Activated CD8-positive, alpha-beta memory T cell treated with anti-CD3 and anti-CD28 coated beads, Interleukin-2, amount 10 ng/mL, durations not matched to agents 7 days and 5 days (primary cell): ENCODE measurements at regions of chr1 and their contacts with region 1.

Region 1: DNA sequence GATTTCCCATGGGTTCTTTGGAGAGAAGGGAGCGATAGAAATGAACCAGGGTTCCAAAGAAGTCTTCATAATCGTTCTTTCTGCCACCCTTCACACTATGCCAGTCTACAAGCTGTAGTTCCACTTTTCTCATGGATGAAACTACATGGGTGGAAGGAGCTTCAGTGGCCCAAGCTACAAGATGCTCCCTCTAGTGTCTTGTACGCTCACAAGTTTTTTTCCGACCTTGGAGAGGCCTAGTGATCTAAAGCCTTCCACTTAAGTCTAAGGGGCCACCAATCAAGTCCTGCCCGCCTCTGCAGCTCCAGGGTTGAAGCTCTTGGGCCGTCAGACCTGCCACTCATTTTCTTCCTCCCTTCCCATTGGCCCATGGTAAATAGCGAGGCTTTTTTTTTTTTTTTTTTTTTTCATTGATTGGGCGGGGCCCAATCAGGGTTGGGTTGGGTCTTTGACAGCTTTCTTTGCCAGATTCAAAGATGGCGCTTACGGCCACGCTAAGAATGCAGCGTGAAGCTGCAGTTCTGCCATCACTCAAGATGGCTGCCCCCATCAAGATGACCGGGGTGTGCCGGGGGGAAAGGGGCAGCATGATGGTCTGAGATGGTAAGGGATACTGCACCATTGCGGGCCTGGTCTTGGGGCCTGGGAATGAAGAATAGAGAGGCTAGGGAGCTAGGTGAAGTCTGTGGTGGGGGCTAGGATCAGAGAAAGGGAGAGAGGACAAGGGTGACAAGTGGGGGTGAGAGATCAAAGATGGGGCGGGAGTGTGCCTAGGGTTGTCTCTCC is at the start of gene TOMM40L:
- DNase-seq: peak; percentile 97
- ATAC-seq: peak; percentile 98
- H3K4me3 Mint-ChIP-seq: peak within 1 kb of the TSS; percentile 95
- H3K27ac Mint-ChIP-seq: peak within 1 kb of the TSS; percentile 93
- H3K4me1 Mint-ChIP-seq: peaks cover 32% of the 10 kb centered on the region
- H3K27me3 Mint-ChIP-seq: no peaks in the 10 kb centered on the region
- total RNA-seq, gene TOMM40L: 19.4 to 27.6 TPM

Region 2: GRCh38 chr1:161038523-161039153 is 187.1 kb before region 1 on chr1 and contains the start of gene TSTD1:
- CTCF ChIA-PET with region 1: no interaction called
- DNase-seq: peak; percentile 90
- ATAC-seq: peak; percentile 92
- H3K4me3 Mint-ChIP-seq: peak within 1 kb of the TSS; percentile 84
- H3K27ac Mint-ChIP-seq: peak within 1 kb of the TSS; percentile 90
- H3K4me1 Mint-ChIP-seq: peaks cover 47% of the 10 kb centered on the region
- H3K27me3 Mint-ChIP-seq: no peaks in the 10 kb centered on the region
- total RNA-seq, gene TSTD1: 62.8 TPM

Region 3: GRCh38 chr1:161165742-161166668 is 59.7 kb before region 1 on chr1 and contains the start of gene PPOX:
- CTCF ChIA-PET with region 1: interaction called, 24 read pairs
- DNase-seq: peak; percentile 98
- ATAC-seq: peak; percentile 95
- H3K4me3 Mint-ChIP-seq: peak within 1 kb of the TSS; percentile 83
- H3K27ac Mint-ChIP-seq: peak within 1 kb of the TSS; percentile 95
- H3K4me1 Mint-ChIP-seq: peaks cover 44% of the 10 kb centered on the region
- H3K27me3 Mint-ChIP-seq: no peaks in the 10 kb centered on the region
- total RNA-seq, gene PPOX: 34.5 to 43.9 TPM

Region 4: GRCh38 chr1:161192476-161193465 is 33.0 kb before region 1 on chr1:
- CTCF ChIA-PET with region 1: interaction called, 77 read pairs
- DNase-seq: peak; percentile 82
- ATAC-seq: peak; percentile 94
- H3K4me3 Mint-ChIP-seq: no peak overlapping the region
- H3K27ac Mint-ChIP-seq: peak overlapping the region; percentile 83
- H3K4me1 Mint-ChIP-seq: peaks cover 42% of the 10 kb centered on the region
- H3K27me3 Mint-ChIP-seq: no peaks in the 10 kb centered on the region

Region 5: GRCh38 chr1:161209790-161210409 is 15.8 kb before region 1 on chr1:
- CTCF ChIA-PET with region 1: interaction called, 110 read pairs
- DNase-seq: peak; percentile 82
- ATAC-seq: peak; percentile 90
- H3K4me3 Mint-ChIP-seq: no peak overlapping the region
- H3K27ac Mint-ChIP-seq: peak overlapping the region; percentile 57
- H3K4me1 Mint-ChIP-seq: peaks cover 32% of the 10 kb centered on the region
- H3K27me3 Mint-ChIP-seq: no peaks in the 10 kb centered on the region

Region 6: GRCh38 chr1:161292631-161293030 is 66.9 kb after region 1 on chr1:
- CTCF ChIA-PET with region 1: interaction called, 39 read pairs
- DNase-seq: no peak
- ATAC-seq: no peak
- H3K4me3 Mint-ChIP-seq: no peak overlapping the region
- H3K27ac Mint-ChIP-seq: no peak overlapping the region
- H3K4me1 Mint-ChIP-seq: peaks cover 4% of the 10 kb centered on the region
- H3K27me3 Mint-ChIP-seq: no peaks in the 10 kb centered on the region

Region 7: GRCh38 chr1:161314201-161314981 is 88.7 kb after region 1 on chr1 and contains the start of gene SDHC:
- CTCF ChIA-PET with region 1: interaction called, 20 read pairs
- DNase-seq: peak; percentile 93
- ATAC-seq: peak; percentile 99
- H3K4me3 Mint-ChIP-seq: peak within 1 kb of the TSS; percentile 87
- H3K27ac Mint-ChIP-seq: peak within 1 kb of the TSS; percentile 95
- H3K4me1 Mint-ChIP-seq: peaks cover 24% of the 10 kb centered on the region
- H3K27me3 Mint-ChIP-seq: no peaks in the 10 kb centered on the region
- total RNA-seq, gene SDHC: 144 to 173 TPM

Region 8: DNA sequence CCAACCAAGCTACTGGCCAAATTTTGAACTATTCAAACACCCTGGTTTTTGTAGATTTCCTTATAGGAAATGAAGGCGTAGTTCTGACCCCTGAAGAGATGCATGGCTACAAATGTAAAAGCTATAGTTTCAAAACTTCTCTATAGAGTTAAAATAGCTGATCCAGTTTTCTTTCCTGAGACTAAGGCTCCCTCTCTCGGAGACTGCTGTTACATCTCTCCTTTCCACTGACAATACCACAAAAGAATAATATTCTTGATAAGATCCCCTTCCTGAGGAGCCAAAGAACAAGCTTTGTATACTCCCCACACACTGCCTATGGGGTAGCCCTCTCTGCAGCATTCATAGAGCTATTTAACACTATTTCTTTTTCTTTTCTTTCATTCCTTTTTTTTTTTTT is 148.6 kb after region 1 on chr1:
- CTCF ChIA-PET with region 1: interaction called, 215 read pairs
- DNase-seq: no peak
- ATAC-seq: no peak
- H3K4me3 Mint-ChIP-seq: no peak overlapping the region
- H3K27ac Mint-ChIP-seq: no peak overlapping the region
- H3K4me1 Mint-ChIP-seq: peaks cover 6% of the 10 kb centered on the region
- H3K27me3 Mint-ChIP-seq: no peaks in the 10 kb centered on the region